Right ventricle myocardium superior (tissue), 1 donor: ENCODE measurements at regions of chr6 and their contacts with region 1.

Region 1: DNA sequence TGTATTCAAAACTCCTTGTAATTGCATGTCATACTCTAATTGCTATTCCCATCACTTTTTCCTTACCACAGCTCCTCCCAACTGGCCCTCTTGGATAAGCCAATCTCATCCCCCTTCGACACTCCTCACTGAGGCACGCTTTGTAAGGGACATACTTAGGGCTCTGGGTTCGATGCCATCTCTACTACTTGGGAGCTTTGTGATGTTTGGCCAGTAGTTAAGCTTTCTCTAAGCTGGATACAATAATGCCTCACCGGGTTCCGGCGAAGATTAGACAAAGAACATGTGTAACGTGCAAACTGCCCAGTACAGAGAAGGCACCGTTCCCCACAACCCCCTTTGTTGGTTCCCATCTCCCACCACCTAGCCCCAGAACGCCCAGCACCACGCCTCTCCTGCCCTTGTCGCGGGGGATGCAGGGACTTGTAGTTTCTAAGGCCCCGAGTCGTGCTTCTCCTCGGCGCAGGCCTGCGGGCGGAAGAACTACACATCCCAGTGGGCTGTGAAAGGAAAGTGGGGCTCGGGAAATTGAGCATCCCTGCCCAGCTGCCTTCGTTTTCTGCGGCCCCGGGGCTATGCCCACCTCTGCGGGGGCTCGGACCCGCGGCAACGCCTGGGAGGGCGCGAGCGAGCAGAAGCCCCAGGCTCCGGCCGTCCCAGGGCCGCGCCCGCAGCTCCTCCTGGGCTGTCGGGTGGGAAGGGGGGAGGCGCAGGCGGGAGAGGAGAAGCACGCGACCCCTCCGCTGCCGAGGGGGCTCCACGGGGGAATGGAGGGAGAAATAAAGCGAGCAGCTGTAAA is 1.1 kb upstream of the ZDHHC14 start:
- DNase-seq: peak; percentile 94
- ATAC-seq: peak; percentile 94

Region 2: GRCh38 chr6:157323255-157323965 is 56.4 kb before region 1 on chr6 and contains the start of gene TMEM242:
- intact Hi-C with region 1: loop called (anchors 5 kb)
- DNase-seq: peak; percentile 94
- ATAC-seq: peak; percentile 96
- total RNA-seq, gene TMEM242: 18.1 TPM

Region 3: DNA sequence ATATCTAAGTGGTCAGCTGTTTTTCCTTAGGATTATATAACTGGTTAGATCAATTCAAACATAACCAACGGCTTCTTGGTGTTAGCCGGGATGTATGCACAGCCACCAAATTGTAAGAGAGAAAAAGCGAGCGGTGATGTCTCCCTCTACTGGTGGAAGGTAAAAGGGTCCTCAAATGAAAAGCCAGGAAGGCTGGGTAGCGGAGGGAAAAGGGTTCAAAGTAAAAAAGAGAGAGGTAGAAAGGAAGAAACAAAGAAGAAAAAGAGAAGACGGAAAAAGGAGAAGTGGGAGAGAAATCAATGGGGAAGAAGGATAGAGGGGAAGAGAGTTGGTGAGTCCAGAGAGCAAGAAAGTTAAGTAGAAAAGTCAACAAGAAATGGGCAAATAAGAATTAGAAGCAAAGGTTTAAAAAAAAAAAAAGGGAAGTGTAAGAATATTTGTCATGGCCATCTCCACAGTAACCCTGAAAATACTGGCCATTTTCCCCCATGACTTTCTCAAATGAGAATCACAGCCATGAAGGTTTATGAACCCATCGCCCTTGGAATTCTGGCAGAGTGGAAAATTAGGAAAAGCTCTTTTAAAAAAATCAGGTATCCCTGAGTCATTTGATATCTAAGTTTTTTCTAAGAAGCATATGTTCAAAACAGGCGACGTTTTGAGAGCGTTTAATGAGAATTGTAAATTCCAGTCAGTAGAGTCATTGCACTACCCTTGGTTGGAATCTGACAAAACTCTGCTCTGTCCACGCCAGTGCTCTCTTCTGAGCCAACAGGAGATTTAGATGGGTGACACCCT is 287.6 kb after region 1 on chr6:
- intact Hi-C with region 1: loop called (anchors 10 kb)
- DNase-seq: no peak
- ATAC-seq: peak; percentile 55